BJ (cell line): ENCODE measurements at regions of chr12 and their contacts with region 1.

Region 1: DNA sequence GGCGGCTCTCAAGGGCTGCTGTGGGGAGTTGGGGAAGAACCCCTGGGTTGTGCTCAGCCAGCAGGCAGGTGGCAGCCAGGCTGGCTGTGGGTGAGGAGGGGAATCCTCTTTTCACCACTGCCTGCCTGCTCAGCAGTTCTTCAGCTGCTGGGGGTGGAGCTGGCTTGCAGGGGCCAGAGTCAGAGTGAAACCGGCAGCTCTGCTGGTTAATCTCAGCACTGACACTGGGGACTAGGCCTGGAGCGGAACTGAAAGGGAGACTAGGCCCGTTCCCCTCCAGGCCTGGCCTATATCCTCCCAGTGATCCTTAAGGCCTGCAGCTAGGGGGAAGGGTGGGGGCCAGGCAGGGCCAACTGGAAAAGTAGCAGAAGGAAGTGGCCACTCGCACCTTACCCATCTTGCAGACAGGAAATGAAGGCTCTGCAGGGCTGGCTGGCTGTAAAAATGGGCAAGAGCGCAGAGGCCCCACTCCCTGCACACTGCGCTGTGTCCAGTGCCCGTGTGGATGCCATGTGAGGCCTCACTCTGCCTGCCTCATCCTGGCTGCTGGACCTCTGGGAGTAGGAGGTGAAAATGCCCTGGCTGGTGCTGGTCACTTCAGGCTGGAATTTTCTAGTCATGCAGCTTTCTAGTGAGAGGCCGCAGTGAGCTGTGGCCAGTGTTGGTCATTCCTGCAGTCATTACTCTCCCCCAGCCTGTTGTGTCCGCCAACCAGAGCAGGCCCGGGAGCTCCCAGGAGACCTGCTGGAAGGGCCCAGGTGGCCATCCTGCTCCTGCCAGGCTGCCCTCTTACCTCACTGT is 39.4 kb downstream of the SH2B3 start:
- DNase-seq: no peak
- H3K4me3 ChIP-seq: no peak overlapping the region
- H3K27me3 ChIP-seq: no peaks in the 10 kb centered on the region
- CTCF ChIP-seq: 0 out of 2 replicates have a peak, but pooled peaks have one; percentile 11

Region 2: DNA sequence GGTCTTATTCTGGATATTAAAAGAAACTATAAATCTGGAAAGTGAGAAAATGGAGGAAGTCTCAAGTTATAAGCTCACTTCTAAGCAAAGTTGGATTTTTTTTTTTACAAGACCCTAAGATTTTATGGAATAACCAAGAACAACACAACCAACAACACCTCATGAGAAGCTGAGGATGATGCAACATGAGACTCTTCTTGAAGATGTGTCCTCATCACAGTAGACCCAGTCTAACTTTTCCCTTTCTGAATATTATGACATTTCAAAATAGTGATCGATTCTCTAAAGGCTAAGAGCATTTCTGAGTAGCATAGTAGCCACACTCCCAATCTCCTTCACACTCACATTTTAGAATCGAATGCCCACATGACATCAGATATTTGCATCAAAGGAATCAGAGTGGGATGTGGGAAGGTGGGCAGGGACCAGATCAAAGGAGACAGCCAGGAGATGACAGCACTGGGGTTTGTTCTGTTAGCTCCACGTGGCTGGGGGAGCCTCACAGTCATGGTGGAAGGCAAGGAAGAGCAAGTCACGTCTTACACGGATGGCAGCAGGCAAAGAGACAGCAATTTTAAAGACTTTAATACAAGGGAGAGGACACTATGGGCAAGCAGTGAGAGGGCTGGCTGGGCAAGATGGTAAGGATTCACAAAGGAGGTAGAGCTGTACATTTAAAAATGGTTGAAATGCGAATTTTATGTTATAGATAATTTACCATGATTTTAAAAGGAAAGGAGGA is 434.0 kb before region 1 on chr12:
- CTCF ChIA-PET with region 1: interaction called, 10 read pairs
- POLR2A ChIA-PET with region 1: no interaction called
- DNase-seq: no peak
- H3K4me3 ChIP-seq: no peak overlapping the region
- H3K27me3 ChIP-seq: no peaks in the 10 kb centered on the region
- CTCF ChIP-seq: no peak

Region 3: DNA sequence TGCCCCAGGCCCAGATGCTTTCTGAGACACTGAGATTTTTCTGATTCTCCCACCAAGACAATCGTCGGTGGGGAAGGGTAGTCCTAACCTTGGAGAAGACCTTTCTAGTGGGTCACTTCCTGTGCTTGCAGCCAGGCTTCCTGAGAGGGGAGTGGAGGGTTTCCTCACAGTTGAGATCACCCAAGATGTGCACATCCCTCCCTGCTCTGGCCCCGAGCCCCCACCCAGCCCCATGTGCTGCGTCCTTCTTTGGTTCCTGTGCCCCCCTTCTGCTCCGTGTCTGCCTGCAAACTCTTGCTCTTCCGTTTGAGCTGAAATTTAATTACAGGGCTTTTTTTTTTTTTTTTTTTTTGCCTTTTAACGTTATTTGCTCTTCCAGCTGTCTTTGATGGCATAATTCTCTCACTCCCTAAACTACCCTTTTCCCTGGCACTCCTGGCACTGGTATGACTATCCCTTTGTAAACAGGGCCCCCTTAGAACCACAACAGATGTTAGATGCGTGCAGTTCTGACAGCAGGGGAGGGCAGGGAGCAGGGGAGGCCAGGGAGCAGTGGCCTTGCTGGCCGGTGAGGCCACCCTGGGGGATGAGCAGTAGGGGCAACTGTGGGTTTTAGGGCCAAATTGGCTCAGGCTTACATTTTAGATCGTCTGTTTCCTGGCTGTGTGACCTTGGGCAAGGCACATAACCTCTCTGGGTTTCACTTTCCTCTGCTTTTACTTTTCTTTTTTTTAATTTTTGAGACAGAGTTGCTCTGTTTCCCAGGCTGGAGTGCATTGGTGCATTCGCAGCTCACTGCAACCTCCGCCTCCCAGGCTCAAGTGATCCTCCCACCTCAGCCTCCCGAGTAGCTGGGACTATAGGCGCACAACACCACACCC is 220.7 kb before region 1 on chr12:
- CTCF ChIA-PET with region 1: no interaction called
- POLR2A ChIA-PET with region 1: no interaction called
- DNase-seq: no peak
- H3K4me3 ChIP-seq: no peak overlapping the region
- H3K27me3 ChIP-seq: no peaks in the 10 kb centered on the region
- CTCF ChIP-seq: no peak

Region 4: DNA sequence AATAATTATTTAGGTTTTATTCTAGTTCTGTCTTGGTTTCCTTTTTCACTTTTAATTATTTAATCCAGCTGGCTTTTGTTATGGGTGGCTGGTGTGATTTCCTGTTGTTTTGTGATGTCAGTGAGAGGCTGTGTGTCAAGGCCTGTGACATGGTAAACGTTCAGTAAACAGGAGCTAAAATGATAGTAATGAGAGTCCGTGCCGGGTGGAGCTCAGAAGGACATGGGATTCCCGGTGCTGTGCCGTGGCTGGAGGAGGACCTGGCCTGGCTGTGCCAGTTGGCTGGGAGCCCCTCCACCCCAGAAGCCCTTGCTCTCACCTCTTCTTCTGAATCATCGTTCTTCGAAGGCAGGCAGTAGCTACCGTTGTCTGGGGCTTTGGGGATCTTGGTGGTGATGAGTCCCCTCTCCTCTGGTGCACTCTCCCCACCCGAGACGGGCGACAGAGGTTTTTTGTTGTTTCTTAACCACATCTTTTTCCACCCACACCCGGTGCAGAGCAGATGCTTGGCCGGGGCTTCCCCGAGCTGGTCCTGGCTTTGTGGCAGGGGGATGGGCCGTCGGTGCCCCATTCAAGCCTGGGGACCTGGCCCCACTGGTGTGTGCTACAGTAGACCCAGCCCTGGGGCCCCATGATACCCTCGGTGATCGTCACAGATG is 10.3 kb before region 1 on chr12:
- CTCF ChIA-PET with region 1: interaction called, 10 read pairs
- POLR2A ChIA-PET with region 1: no interaction called
- DNase-seq: no peak
- H3K4me3 ChIP-seq: no peak overlapping the region; the same call in 1 of the 2 replicates
- H3K27me3 ChIP-seq: no peaks in the 10 kb centered on the region
- CTCF ChIP-seq: no peak